GM13977 (cell line): ENCODE measurements at regions of chr10 and their contacts with region 1.

Region 1: GRCh38 chr10:123552760-123553554 is 113.2 kb upstream of the GPR26 start:
- DNase-seq: peak; percentile 71
- CTCF ChIP-seq: no peak

Region 2: DNA sequence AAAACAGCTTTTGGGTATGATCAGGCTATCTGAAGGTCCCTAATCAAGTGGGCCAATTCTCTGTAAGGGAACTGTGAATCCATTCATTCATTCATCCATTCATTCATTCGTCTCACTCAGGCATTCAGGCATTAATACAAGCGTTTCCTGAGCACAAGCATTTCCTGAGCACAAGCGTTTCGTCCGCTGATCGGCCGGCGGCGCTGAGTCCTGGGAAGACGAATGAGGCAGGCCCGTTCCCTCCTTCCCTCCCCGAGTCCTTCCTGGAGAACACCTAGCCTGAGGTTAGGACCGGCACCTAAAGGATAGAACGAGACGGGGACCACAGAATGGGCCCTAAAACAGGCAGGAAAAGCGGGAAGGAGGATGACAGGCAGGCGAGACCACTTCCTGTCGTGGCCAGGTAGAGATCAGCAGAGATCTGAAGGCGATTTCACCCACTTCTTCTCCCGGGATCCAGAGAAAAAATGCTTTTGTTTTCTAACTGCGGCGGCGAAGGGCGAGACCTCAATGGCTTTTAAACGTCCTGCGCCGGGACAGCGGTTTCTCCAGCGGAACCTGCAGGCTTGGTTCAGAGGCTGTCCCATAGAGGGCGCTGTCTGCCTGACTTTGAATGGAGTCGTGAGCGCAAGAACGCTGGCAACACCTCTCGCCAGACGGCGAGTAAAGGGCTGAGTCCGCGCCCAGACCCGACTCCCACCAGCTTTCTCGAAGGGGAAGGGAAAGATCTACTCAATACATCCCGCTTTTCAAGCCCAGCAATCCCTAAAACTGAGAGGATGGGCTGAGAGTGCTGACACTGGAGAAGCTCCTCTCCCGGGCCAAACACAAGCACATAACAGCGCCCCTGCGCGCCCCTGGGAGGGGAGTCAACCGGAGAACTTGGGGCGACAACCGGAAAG is 420.1 kb before region 1 on chr10:
- in situ Hi-C with region 1: loop called (anchors 5 kb)
- DNase-seq: peak; percentile 90
- CTCF ChIP-seq: peak; percentile 97

Region 3: GRCh38 chr10:123392182-123392963 is 160.6 kb before region 1 on chr10:
- in situ Hi-C with region 1: loop called (anchors 5 kb)
- DNase-seq: peak; percentile 75
- CTCF ChIP-seq: no peak

Region 4: DNA sequence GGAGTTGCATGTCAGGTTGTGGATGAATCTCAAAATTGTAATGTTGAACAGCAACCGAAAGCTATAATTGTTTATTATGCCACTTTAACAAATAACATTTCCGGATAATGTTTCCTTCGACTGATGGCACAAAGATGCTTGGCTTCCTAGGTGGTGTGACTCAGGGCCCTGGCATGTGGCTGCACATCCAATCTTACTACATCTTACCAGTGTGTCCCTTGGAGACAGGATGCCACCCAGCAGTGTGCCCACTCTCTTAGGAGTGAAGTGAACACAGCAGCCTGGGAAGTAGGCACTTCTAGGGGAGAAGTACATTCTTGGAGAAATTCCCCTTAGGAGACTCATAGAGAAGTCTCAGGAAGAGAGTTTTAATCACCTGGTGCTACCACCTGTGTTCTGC is 80.1 kb after region 1 on chr10:
- in situ Hi-C with region 1: no loop called
- DNase-seq: no peak
- CTCF ChIP-seq: no peak

Region 5: DNA sequence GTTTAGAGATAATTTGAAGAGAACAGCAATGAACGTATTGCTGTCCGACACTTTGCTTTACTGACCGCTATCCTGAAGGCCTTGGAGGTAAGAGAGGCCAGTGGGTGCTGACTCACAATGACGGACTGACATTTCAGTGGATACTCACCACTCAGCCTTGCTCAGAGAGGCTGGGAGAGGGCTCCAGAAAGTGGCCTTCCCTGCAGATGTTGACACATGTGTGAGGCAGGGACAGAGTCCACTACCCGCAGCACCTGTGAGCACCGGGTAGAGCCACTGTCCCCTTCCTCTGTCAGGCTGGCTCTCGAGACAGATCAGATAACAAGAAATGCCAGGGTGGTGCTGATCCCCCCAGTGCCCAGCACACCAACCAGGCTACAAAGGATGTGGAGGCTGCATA is 188.2 kb after region 1 on chr10:
- in situ Hi-C with region 1: no loop called
- DNase-seq: no peak
- CTCF ChIP-seq: no peak